Activated CD4-positive, alpha-beta T cell treated with anti-CD3 and anti-CD28 coated beads, Interleukin-2, amount 10 ng/mL, durations not matched to agents 24 days and 14 days (primary cell): ENCODE measurements at regions of chr6 and their contacts with region 1.

Region 1: DNA sequence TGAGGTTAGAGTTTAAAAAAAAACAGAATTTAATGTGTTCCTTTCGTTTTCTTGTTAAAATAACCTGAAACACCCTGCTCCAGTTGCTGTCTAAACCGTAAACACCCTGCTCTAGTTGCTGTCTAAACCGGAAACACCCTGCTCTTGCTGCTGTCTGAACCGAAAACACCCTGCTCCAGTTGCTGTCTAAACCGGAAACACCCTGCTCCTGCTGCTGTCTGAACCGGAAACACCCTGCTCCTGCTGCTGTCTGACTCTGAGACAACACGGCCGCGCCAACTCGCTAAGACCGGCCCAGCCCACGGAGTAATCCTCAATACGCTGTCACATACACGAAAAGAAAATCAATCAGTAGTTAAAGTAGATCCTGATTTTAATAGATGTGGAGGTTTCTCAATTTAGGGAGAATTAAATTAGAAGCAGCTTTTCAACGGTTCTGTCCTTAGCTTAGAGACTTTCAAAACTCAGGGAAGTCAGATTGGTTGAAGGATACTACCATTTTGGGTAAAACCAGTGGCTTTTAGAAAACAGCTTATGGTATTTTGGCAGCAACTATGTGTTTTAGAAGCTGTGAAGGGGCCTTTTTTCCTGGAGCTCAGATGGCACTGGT is 98.3 kb downstream of the RAMACL start:
- DNase-seq: peak; percentile 90
- H3K4me3 Mint-ChIP-seq: peak overlapping the region; percentile 71
- H3K27ac Mint-ChIP-seq: peak overlapping the region; percentile 95
- H3K4me1 Mint-ChIP-seq: peaks cover 13% of the 10 kb centered on the region
- H3K27me3 Mint-ChIP-seq: no peaks in the 10 kb centered on the region

Region 2: GRCh38 chr6:166342349-166343149 is 145.6 kb before region 1 on chr6 and contains the start of gene SFT2D1:
- intact Hi-C with region 1: loop called (anchors 5 kb)
- DNase-seq: peak; percentile 96
- H3K4me3 Mint-ChIP-seq: peak within 1 kb of the TSS; percentile 99
- H3K27ac Mint-ChIP-seq: peak within 1 kb of the TSS; percentile 93
- H3K4me1 Mint-ChIP-seq: peaks cover 8% of the 10 kb centered on the region
- H3K27me3 Mint-ChIP-seq: peaks cover 4% of the 10 kb centered on the region
- total RNA-seq, gene SFT2D1: 56.9 and 61.2 TPM in 2 replicates

Region 3: GRCh38 chr6:166419286-166419685 is 68.9 kb before region 1 on chr6:
- intact Hi-C with region 1: loop called (anchors 5 kb)
- DNase-seq: peak; percentile 86
- H3K4me3 Mint-ChIP-seq: peak overlapping the region; percentile 9
- H3K27ac Mint-ChIP-seq: peak overlapping the region; percentile 50
- H3K4me1 Mint-ChIP-seq: peaks cover 61% of the 10 kb centered on the region
- H3K27me3 Mint-ChIP-seq: no peaks in the 10 kb centered on the region